ENCODE measurements at regions of chr12 and their contacts with region 1.

Region 1: DNA sequence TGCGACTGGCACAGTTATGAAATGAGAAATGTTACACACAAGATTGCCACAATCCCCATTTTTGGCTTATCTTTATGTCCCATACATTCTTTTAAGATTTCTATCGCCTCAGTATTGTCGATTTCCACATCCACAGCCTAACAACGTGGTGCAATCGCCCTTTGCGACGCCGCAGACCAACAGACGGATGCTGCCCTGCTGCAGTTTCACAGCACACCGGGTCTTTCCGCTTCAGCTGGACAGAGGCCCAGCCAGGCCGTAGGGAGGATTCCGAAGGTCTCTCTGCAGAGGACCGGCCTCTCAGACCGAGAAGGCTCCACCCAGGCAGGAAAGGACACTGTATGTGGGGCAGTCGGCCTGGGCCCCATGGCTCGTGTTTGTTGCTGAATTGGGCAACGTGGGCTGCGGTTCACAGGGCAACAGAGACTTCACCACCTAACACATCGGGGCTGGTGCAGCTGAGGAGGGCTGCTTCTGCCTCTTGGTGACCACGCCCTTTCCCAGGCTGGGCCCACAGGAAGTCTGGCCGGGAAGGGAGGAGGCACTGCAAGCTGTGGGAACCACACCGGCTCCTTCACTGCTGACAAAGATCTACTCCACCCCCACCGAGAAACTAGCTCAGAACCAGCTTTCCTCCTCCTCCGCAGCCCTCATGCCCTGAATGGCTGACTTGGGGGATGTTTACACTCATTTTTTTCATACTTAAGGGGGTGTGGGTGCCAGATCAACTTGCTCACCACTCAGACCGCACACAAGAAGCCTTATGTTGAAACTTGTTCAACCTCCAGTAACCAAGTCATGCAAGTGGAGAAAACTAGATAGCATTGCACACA is 32.9 kb upstream of the MDM1 start:
- DNase-seq: peak in 1 of 2 donors; percentile 97
- H3K4me3 ChIP-seq: peak overlapping the region; percentile 37 to 41
- H3K27ac ChIP-seq: peak overlapping the region; percentile 69
- H3K4me1 ChIP-seq: peaks cover 29% of the 10 kb centered on the region
- H3K27me3 ChIP-seq: no peaks in the 10 kb centered on the region
- CTCF ChIP-seq: no peak
- POLR2A ChIP-seq: no peak

Region 2: GRCh38 chr12:68400226-68400829 is 35.2 kb after region 1 on chr12:
- intact Hi-C with region 1: loop called (anchors 5 kb)
- DNase-seq: no peak
- H3K4me3 ChIP-seq: no peak overlapping the region
- H3K27ac ChIP-seq: no peak overlapping the region
- H3K4me1 ChIP-seq: peaks cover 3% of the 10 kb centered on the region
- H3K27me3 ChIP-seq: no peaks in the 10 kb centered on the region
- CTCF ChIP-seq: no peak
- POLR2A ChIP-seq: no peak

Measured in vagina (tissue), 2 donors.